Cardiac septum (tissue), 1 donor: ENCODE measurements at regions of chr2 and their contacts with region 1.

Region 1: DNA sequence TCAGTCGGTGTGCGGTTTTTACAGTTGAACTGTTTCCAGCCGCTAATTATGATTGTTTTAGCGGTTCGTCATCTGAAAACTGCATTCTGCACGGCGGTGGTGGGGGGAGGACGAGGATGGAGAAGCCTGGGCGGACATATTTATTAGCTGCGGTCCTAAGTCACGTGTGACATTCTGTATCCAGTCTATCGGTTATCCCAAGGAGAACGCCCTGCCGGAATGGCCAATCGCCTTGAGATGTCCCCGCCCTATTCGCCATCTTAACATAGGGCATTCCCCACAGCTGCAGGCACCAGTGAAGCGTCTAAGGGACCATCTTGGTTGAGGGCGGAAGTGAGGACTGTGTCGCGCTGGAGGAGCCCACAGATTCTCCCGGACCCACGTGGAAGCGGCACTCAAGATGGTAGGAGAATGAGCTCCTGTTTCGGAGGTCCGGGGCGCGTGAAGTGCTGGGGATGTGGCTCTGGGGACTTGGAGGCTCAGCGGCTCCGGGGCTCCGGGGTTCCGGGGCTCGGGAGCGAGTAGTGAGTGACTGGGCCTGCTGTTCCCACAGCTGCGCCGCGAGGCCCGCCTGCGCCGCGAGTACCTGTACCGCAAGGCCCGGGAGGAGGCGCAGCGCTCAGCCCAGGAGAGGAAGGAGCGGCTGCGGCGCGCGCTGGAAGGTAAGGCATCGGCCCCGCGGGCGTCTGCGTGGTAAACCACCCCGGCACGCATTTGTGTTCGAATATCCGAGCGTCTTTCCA is at the start of gene IMP4:
- DNase-seq: peak; percentile 99
- total RNA-seq, gene IMP4: 60.7 TPM

Region 2: GRCh38 chr2:129847043-129847442 is 495.7 kb before region 1 on chr2:
- intact Hi-C with region 1: no loop called
- DNase-seq: no peak

Region 3: GRCh38 chr2:130355578-130356431 is 13.1 kb after region 1 on chr2 and contains the start of gene PTPN18:
- intact Hi-C with region 1: loop called (anchors 1 kb)
- DNase-seq: peak; percentile 96
- total RNA-seq, gene PTPN18: 13.4 TPM

Region 4: DNA sequence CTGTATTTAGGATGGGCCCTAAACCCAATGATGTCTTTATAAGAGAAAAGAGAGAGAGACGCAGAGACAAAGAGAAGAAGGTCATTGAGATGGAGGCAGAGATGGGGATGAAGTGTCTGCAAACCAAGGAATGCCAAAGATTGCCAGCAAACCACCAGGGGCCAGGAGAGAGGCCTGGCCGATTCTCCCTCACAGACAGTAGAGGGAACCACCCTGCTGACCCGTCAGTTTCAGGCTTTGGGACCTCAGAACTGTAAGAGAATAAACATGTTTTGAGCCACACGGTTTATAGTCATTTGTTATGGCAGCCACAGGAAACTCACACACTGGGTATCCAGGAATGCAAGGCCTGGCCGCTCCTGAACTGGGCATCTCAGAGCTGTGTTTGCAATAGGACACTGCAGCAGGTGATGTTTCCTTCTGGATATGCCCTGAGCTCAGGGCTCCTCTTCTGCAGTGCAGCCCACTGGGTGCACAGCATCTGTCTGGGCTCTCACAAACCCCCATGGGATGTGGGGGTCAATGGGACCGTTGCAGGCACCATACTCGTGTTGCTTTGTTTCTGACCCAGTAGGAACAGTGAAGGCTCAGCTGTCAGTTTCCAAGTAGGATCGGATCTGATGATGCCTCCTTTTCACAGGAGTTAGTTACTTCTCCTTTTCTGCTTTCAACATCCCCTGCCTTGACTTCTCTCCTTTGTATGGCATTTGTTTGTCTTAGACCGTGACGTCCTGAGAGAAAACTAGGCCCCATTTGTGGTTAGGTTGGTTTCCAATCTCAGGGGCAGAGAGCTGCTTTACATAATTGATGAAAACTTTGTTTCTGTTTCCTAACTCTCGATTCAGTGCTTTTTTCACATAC is 34.0 kb after region 1 on chr2:
- intact Hi-C with region 1: no loop called
- DNase-seq: no peak

Region 5: GRCh38 chr2:130391058-130391871 is 48.6 kb after region 1 on chr2:
- intact Hi-C with region 1: loop called (anchors 2 kb)
- DNase-seq: peak; percentile 93

Region 6: DNA sequence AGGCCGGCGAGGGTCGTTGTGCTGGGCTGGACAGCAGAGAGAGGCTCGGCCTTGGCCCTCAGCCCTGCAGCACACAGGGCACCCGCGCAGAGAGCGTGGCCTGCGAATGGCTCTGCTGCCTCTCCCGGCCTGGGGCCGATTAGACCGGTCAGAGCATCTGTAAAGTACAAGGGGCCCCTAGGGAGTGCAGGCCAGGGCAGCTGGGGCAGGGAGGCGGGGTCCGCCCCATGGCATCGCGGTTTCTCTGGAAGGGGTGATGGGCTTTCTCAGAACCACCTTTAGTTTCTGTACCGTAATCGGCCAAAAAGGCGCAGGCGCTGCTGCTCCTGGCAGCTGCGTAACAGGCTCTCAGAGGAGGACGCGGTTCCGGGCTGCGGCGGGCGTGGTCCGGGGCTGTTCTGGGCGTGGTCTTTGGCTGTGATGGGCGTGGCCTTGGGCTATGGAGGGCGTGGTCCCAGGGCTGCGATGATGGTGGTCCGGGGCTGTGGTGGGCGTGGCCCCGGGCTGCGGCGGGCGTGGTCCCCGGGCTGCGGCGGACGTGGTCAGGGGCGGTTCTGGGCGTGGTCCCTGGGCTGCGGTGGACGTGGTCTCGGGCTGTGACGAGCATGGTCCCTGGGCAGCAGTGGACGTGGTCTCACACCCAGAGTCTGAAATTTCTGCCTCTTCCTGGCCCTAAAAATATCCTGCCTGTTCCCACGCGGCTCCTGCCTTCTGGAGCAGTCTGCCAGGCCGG is 384.7 kb after region 1 on chr2:
- intact Hi-C with region 1: no loop called
- DNase-seq: peak; percentile 87